AG04450 (cell line): ENCODE measurements at regions of chr2 and their contacts with region 1.

Region 1: DNA sequence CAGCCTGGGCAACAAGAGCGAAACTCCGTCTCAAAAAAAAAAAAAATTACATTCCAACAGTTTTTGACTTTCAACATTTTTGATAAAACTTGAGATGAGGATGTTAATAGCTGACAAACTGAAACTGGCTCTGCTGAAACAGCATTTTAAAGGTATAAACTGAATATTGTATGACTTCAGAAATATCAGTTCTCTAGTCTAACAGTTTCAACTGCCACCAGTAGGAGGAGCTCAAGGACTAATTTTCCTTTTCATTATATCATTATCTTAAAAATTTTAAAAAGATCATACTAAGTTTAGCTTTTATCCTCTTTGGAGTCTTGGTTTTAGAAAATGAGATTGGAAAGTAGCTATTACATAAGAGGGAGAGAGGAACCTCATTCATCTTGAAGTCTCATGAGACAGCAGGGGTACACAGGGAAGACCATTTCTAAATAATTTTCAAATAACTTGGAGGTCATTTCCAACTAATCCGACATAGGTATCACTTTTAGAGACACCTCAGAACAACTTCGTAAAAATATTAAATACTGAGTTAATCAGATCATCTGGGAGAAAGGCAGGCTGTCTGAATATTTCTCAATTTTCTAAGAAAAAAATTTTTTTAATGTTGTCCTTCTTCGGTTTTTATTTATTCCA is 37.6 kb upstream of the MCM6 start:
- DNase-seq: no peak
- H3K4me3 ChIP-seq: no peak overlapping the region
- H3K27ac ChIP-seq: no peak overlapping the region
- H3K27me3 ChIP-seq: no peaks in the 10 kb centered on the region
- CTCF ChIP-seq: peak; percentile 76

Region 2: GRCh38 chr2:135925571-135925970 is 11.7 kb after region 1 on chr2:
- CTCF ChIA-PET with region 1: interaction called, 22 read pairs
- POLR2A ChIA-PET with region 1: no interaction called
- DNase-seq: no peak
- H3K4me3 ChIP-seq: no peak overlapping the region
- H3K27ac ChIP-seq: no peak overlapping the region
- H3K27me3 ChIP-seq: no peaks in the 10 kb centered on the region
- CTCF ChIP-seq: no peak

Region 3: DNA sequence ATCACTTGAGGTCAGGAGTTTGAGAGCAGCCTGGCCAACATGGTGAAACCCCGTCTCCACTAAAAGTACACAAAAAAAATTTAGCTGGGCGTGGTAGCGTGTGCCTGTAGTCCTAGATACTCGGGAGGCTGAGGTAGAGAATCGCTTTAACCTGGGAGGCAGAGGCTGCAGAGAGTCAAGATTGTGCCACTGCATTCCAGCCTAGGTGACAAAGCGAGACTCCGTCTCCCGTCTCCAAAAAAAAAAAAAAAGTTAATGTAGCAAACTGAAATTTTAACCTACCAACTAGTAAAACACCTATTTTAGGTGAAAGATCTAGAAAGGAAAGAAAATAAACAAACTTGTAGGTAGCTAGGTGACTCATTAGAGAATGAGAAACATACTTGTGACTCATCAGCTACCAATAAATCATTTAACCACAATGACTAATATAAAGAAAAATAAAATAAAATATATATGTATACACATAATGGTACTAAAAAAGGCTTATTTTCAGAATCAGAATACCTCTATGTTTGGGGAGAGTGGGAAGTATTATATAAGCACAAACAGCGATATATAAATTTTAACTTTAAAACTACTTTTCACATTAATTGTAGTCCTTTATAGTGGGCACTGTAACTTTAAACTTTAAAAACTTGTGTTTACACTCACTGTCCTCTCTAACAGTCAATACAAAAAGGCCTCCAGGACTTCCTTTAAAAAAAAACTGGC is 35.0 kb after region 1 on chr2:
- CTCF ChIA-PET with region 1: interaction called, 10 read pairs
- POLR2A ChIA-PET with region 1: no interaction called
- DNase-seq: no peak
- H3K4me3 ChIP-seq: no peak overlapping the region
- H3K27ac ChIP-seq: no peak overlapping the region
- H3K27me3 ChIP-seq: no peaks in the 10 kb centered on the region
- CTCF ChIP-seq: no peak

Region 4: DNA sequence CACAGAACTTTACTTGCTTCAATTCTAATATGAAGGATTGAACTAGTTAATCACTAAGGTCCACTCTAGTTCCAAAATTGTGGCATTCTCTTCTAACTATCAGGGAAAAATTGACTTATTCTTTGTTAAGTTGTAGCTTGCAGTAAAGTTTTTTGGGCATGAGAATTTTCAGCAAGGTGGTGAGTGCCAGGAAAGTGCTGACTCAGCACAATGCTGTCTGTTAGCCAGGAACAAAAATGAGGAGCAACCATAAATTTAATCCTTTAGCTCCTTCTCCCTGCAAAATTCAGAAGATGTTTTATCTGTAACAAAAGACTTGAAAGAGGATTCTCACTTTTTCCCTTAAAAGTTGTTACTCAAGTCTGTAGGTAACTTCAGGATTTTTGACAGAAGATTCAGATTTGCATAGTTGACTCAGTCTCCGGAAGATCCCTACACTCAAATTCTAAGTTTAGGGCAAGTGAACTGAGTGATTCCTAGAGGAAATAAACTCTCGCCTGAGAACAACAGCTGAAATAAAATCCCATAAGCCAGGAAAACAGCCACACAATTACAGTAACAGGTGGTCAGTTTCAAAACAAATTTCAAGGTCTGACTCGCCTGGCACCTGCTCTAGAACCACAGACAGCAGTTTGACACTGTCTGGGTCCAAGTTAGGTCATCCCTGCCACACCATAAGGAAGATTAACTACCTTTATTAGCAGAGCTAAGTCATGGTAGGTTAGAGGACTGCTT is 91.8 kb after region 1 on chr2:
- CTCF ChIA-PET with region 1: interaction called, 10 read pairs
- POLR2A ChIA-PET with region 1: no interaction called
- DNase-seq: no peak
- H3K4me3 ChIP-seq: no peak overlapping the region
- H3K27ac ChIP-seq: no peak overlapping the region
- H3K27me3 ChIP-seq: peaks cover 2% of the 10 kb centered on the region
- CTCF ChIP-seq: no peak

Region 5: DNA sequence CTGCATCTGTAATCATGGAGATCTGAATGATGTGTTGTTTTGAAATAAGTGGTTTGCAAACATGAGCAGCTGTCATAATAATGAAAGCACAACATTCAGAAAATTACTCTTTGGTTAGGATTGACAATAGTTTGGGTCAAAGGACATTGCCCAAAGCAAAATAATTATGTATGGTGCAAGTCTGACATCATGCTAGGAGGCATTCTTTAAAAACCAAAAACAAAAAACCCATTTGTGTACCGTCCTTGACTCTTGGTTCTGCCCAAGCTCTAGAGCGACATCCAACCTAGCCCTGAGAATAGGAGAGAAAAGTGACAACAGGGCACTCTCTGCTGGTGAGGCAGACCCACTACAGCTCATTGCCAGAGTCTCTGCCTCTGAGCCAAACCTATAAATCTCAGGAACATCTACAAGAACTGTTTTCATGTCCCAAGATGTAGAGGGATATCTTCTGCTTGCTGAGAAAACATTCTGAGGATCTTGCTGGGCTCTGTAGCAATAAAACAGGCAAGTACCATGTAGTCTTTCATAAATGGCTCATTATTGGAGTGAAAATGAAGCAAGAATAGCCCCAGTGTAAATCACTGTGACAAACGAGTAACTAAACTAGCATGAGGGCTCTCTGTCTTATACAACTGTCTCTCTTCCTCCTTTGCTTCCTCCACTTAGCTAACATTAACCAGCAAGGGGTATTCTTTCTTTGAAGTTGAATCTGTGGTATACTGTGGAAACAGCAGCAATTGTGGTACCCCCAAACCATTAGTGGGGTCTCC is 470.9 kb after region 1 on chr2:
- CTCF ChIA-PET with region 1: interaction called, 31 read pairs
- POLR2A ChIA-PET with region 1: interaction called, 3 read pairs
- DNase-seq: no peak
- H3K4me3 ChIP-seq: no peak overlapping the region
- H3K27ac ChIP-seq: no peak overlapping the region
- H3K27me3 ChIP-seq: no peaks in the 10 kb centered on the region
- CTCF ChIP-seq: peak; percentile 30; the same call in 1 of the 2 replicates